Spleen (tissue), 13 donors: ENCODE measurements at regions of chr20 and their contacts with region 1.

Region 1: GRCh38 chr20:34111702-34112599 is at the start of gene EIF2S2:
- DNase-seq: peak; percentile 98
- H3K4me3 ChIP-seq: peak within 1 kb of the TSS; percentile 75 to 98 (median 92)
- H3K27ac ChIP-seq: peak within 1 kb of the TSS; percentile 87 to 99 (median 98)
- H3K4me1 ChIP-seq: peaks cover 26 to 56% (median 45%) of the 10 kb centered on the region in 6 donors
- H3K27me3 ChIP-seq: no peaks in the 10 kb centered on the region
- CTCF ChIP-seq: peak in 4 of 11 experiments; percentile 3 to 41 (median 30)
- POLR2A ChIP-seq: peak; percentile 13 to 93 (median 92)
- total RNA-seq, gene EIF2S2: 34.8 to 45.3 (median 39.9) TPM

Region 2: DNA sequence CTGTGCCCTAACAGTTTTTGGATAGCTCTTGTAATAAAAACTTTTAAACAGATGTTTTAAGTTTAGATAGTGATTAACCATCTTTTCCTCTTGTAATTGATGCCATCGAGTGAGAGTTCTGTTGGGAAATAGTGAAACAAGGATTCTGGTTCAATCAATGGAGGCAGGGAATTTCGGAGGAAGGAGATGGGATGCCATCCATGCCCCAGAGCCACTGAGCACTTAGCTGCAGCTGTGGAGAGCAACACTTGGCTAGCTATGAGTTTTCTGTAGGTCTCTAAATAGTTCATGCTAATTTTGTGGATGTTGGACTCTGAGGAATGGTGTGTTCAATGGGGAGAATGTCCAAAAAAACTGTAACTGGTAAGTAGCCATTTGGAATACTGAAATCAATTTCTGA is 605.4 kb before region 1 on chr20:
- intact Hi-C with region 1: no loop called
- DNase-seq: no peak
- H3K4me3 ChIP-seq: no peak overlapping the region
- H3K27ac ChIP-seq: no peak overlapping the region
- H3K4me1 ChIP-seq: peaks cover 0 to 23% (median 3%) of the 10 kb centered on the region in 6 donors
- H3K27me3 ChIP-seq: no peaks in the 10 kb centered on the region
- CTCF ChIP-seq: no peak
- POLR2A ChIP-seq: no peak

Region 3: DNA sequence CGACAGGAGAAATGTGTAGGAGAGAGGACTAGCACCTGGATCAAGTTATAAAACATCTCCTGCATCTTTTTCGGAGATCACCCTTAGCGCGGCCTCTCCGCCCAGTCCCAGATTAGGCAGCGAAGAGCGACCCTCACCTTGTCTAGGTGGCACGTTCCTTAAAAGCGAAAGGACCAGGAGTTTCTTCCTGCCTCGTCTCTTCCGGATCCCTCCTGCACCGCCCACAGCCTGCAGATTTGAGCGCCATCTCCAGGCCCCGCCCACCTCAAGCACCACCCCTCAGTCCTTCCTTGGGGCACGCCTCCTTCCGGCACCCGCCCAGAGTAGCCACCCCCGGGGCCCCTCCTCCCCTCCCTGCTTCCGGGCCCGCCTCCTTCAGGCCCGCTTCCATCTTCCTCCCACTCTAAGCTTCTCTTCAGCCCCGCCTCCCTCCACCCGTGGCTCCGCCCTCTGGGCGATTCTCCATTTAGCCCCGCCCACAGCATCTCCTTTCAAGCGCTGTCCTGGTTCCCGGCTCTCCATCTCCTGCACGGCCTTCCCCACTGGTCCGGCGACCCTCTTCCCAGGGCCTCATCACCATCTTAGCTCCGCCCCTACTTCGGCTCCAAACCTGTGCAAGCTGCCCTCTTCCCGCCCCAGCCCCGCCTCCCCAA is 118.9 kb before region 1 on chr20:
- intact Hi-C with region 1: loop called (anchors 5 kb)
- DNase-seq: peak; percentile 100
- H3K4me3 ChIP-seq: peak overlapping the region; percentile 69 to 99 (median 95)
- H3K27ac ChIP-seq: peak overlapping the region; percentile 87 to 100 (median 97)
- H3K4me1 ChIP-seq: peaks cover 18 to 59% (median 51%) of the 10 kb centered on the region in 6 donors
- H3K27me3 ChIP-seq: no peaks in the 10 kb centered on the region
- CTCF ChIP-seq: peak in 3 of 11 experiments; percentile 13 to 42 (median 26)
- POLR2A ChIP-seq: peak in 1 of 3 donors; percentile 21

Region 4: DNA sequence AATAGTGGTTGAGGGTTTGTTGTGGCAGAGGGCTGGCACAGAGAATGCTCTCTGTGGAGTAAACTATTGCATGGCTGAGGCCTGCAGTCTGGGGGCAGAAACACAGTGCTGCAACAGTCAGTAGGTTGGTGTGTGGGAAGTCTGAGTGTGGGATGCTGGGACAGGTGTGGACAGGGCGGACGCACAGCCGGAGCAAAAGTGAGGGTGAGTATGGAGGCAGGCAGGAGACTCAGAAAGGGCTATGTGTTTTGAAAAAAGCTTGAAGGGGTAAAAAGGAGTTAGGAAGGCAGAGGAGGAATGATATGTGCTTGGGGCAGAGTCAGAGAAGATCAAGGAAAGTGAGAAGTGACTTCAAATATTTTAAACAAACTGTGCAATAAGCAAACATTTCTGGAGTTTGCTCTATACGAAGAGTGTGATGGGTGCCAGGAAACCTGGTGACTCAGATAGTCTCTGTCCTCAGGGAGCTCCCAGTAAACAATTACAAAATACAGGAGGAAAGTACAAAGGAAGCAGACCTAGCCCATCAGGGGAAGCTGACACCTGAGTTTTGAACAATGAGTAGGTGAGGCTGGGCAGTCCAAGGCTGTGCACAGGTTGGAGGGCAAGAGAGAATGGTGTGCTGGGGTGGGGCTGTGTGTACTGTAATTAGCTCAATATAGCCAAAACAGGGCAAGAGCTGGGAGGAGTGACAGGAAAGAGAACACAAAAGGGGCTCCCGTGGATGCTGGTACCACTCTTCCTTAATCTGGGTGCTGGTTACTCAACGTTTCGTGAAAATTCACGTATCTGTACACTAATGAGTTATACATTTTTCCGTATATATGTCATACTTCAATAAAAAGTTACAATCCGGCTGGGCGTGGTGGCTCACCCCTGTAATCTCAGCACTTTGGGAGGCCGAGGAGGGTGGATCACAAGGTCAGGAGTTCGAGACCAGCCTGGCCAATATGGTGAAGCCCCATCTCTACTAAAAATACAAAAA is 509.7 kb after region 1 on chr20:
- intact Hi-C with region 1: no loop called
- DNase-seq: no peak
- H3K4me3 ChIP-seq: no peak overlapping the region
- H3K27ac ChIP-seq: peak overlapping the region in 3 of 8 donors; percentile 3 to 69 (median 20)
- H3K4me1 ChIP-seq: peaks cover 0 to 21% (median 3%) of the 10 kb centered on the region in 6 donors
- H3K27me3 ChIP-seq: no peaks in the 10 kb centered on the region
- CTCF ChIP-seq: no peak
- POLR2A ChIP-seq: no peak